Right lobe of liver (tissue), 6 donors: ENCODE measurements at regions of chr1 and their contacts with region 1.

Region 1: DNA sequence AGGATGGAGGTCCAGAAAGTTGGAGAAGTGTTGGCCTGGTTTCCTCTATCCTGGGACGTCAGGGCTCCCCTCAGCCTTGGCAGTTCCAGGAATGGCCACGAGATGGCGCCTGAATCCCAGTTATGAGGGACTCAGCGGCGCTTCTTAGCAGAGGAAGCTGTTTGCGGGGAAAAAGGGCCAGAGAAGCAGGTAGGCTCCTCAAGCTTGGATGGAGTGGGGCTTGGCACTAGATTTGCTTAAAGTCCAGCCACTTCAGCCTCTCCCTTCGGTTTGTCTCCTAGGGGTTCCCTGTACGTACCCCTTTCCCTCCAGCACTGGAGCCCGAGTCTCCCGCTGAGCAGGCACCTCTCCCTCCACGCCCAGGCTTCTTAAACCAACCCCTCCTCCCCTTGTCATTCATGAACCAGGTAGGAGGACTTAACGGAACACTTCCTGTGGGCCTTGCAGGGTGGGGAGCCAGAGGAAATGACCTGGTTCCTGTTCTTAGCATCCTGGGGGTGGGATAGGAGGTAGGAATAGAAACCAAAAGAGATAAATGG is 32.0 kb upstream of the TENT5B start:
- DNase-seq: peak; percentile 85 to 87 (median 87)
- ATAC-seq: peak; percentile 89 to 97 (median 94)
- H3K4me3 ChIP-seq: no peak overlapping the region
- H3K27ac ChIP-seq: no peak overlapping the region
- H3K4me1 ChIP-seq: peaks cover 0 to 4% (median 0%) of the 10 kb centered on the region in 4 donors
- H3K27me3 ChIP-seq: no peaks in the 10 kb centered on the region
- CTCF ChIP-seq: peak; percentile 96 to 99 (median 97)
- POLR2A ChIP-seq: no peak

Region 2: DNA sequence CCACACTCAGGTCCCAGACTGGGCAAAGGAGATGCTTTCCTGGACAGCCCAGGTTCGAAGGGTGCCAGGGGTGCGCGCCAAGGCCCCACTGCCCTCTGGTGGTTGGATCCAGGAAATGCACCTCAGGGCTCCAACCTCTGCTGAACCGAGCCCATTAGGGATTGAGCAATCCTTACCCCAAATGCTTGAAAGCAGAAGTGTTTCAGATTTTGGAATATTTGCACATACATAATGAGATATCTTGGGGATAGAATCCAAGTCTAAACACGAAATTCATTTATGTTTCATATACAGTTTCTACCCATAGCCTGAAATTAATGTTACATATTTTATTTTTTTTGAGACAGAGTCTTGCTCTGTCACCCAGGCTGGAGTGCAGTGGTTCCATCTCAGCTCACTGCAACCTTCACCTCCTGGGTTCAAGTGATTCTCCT is 52.8 kb after region 1 on chr1:
- intact Hi-C with region 1: loop called (anchors 5 kb)
- DNase-seq: peak; percentile 73 to 84 (median 83)
- ATAC-seq: peak; percentile 95 to 99 (median 96)
- H3K4me3 ChIP-seq: no peak overlapping the region
- H3K27ac ChIP-seq: no peak overlapping the region
- H3K4me1 ChIP-seq: peaks cover 0 to 6% (median 0%) of the 10 kb centered on the region in 4 donors
- H3K27me3 ChIP-seq: no peaks in the 10 kb centered on the region
- CTCF ChIP-seq: peak; percentile 97 to 99 (median 98)
- POLR2A ChIP-seq: no peak

Region 3: GRCh38 chr1:27365372-27366112 is 320.9 kb after region 1 on chr1:
- intact Hi-C with region 1: no loop called
- DNase-seq: peak; percentile 88 to 90 (median 88)
- ATAC-seq: peak; percentile 76 to 81 (median 79)
- H3K4me3 ChIP-seq: peak overlapping the region; percentile 56 to 74 (median 68)
- H3K27ac ChIP-seq: peak overlapping the region; percentile 59 to 96 (median 76)
- H3K4me1 ChIP-seq: peaks cover 0 to 22% (median 0%) of the 10 kb centered on the region in 4 donors
- H3K27me3 ChIP-seq: no peaks in the 10 kb centered on the region
- CTCF ChIP-seq: no peak
- POLR2A ChIP-seq: peak; percentile 46

Region 4: GRCh38 chr1:27689423-27690173 is 644.9 kb after region 1 on chr1:
- intact Hi-C with region 1: no loop called
- DNase-seq: no peak
- ATAC-seq: no peak
- H3K4me3 ChIP-seq: no peak overlapping the region
- H3K27ac ChIP-seq: no peak overlapping the region
- H3K4me1 ChIP-seq: no peaks in the 10 kb centered on the region
- H3K27me3 ChIP-seq: no peaks in the 10 kb centered on the region
- CTCF ChIP-seq: no peak
- POLR2A ChIP-seq: no peak